AG04450 (cell line): ENCODE measurements at regions of chr13 and their contacts with region 1.

Region 1: GRCh38 chr13:31424117-31424729 is 224.4 kb downstream of the B3GLCT start:
- DNase-seq: peak; percentile 48
- H3K4me3 ChIP-seq: no peak overlapping the region
- H3K27ac ChIP-seq: no peak overlapping the region
- H3K27me3 ChIP-seq: peaks cover 12% of the 10 kb centered on the region
- CTCF ChIP-seq: peak; percentile 99

Region 2: GRCh38 chr13:31174018-31174417 is 250.2 kb before region 1 on chr13:
- CTCF ChIA-PET with region 1: interaction called, 55 read pairs
- POLR2A ChIA-PET with region 1: no interaction called
- DNase-seq: peak; percentile 51
- H3K4me3 ChIP-seq: no peak overlapping the region
- H3K27ac ChIP-seq: no peak overlapping the region
- H3K27me3 ChIP-seq: no peaks in the 10 kb centered on the region
- CTCF ChIP-seq: peak; percentile 49; the same call in 1 of the 2 replicates

Region 3: GRCh38 chr13:31227063-31227462 is 197.2 kb before region 1 on chr13:
- CTCF ChIA-PET with region 1: interaction called, 348 read pairs
- POLR2A ChIA-PET with region 1: no interaction called
- DNase-seq: no peak
- H3K4me3 ChIP-seq: no peak overlapping the region
- H3K27ac ChIP-seq: no peak overlapping the region
- H3K27me3 ChIP-seq: no peaks in the 10 kb centered on the region
- CTCF ChIP-seq: no peak

Region 4: GRCh38 chr13:31248965-31249539 is 175.2 kb before region 1 on chr13:
- CTCF ChIA-PET with region 1: interaction called, 25 read pairs
- POLR2A ChIA-PET with region 1: no interaction called
- DNase-seq: no peak
- H3K4me3 ChIP-seq: no peak overlapping the region
- H3K27ac ChIP-seq: no peak overlapping the region
- H3K27me3 ChIP-seq: no peaks in the 10 kb centered on the region
- CTCF ChIP-seq: no peak

Region 5: GRCh38 chr13:31322026-31322425 is 102.2 kb before region 1 on chr13:
- CTCF ChIA-PET with region 1: no interaction called
- POLR2A ChIA-PET with region 1: no interaction called
- DNase-seq: no peak
- H3K4me3 ChIP-seq: no peak overlapping the region
- H3K27ac ChIP-seq: no peak overlapping the region
- H3K27me3 ChIP-seq: no peaks in the 10 kb centered on the region
- CTCF ChIP-seq: no peak

Region 6: GRCh38 chr13:31409678-31410356 is 14.4 kb before region 1 on chr13:
- CTCF ChIA-PET with region 1: interaction called, 15 read pairs
- POLR2A ChIA-PET with region 1: no interaction called
- DNase-seq: no peak
- H3K4me3 ChIP-seq: no peak overlapping the region
- H3K27ac ChIP-seq: no peak overlapping the region
- H3K27me3 ChIP-seq: peaks cover 8% of the 10 kb centered on the region
- CTCF ChIP-seq: peak; percentile 34

Region 7: DNA sequence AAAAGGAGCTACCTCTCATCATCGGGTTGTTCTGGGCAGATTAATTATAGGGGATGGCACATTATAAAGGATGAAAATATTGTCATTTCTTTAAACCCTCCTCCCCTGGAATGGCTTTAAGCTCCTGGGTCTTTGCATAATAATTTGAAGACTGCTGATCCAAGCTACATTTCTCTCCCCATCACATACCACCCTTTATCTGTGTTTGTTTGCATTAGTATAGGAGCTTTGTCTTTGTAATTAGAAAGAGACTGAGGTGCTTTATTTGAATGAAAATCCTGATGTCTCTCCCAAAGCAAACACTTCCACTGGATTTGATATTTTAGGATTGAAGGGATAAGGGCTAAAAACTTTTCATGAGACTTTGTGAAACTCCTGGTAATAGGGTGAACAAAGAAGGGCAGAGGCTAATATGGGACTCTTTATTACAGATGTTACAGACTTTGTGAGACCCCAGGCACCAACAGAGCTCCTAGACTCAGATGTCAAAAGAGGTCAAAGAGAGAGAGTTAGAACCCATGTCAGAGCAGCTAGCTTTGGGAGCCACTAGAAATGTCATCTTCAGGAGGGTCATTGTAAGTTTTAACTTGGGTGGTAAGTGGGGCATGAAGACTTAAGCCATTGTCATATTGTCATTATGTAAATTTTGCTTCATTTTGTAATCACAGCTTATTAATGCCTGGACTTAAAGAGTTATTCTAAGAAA is 239.8 kb after region 1 on chr13:
- CTCF ChIA-PET with region 1: no interaction called
- POLR2A ChIA-PET with region 1: no interaction called
- DNase-seq: no peak
- H3K4me3 ChIP-seq: no peak overlapping the region
- H3K27ac ChIP-seq: no peak overlapping the region
- H3K27me3 ChIP-seq: no peaks in the 10 kb centered on the region
- CTCF ChIP-seq: no peak

Region 8: GRCh38 chr13:31742097-31742734 is 318.0 kb after region 1 on chr13:
- CTCF ChIA-PET with region 1: interaction called, 11 read pairs
- POLR2A ChIA-PET with region 1: no interaction called
- DNase-seq: peak; percentile 42
- H3K4me3 ChIP-seq: no peak overlapping the region; the same call in none of the 2 replicates
- H3K27ac ChIP-seq: no peak overlapping the region
- H3K27me3 ChIP-seq: no peaks in the 10 kb centered on the region
- CTCF ChIP-seq: peak; percentile 99